Tibial artery (tissue), 4 donors: ENCODE measurements at regions of chr7 and their contacts with region 1.

Region 1: DNA sequence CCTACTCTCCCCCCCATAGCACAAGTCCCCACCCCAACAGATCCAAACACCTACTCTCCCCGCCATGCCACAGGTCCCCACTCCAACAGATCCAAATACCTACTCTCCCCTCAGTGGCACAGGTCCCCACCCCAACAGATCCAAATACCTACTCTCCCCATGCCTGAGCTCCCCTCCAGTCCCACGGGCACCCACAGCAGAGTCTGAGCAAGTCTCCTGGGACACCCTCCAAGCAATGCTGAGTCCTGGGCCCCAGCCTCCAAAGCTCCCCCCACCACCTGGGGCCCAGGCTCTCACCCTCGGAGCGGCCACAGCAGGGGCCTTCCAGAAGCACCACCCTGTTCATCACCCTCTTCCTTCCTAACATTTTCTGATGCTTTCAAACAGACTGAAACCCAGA is 63.9 kb upstream of the DNAAF5 start:
- DNase-seq: peak in 1 of 2 donors; percentile 7
- H3K4me3 ChIP-seq: no peak overlapping the region
- H3K27ac ChIP-seq: peak overlapping the region in 1 of 2 donors; percentile 8
- H3K4me1 ChIP-seq: peaks cover 5 to 52% (median 43%) of the 10 kb centered on the region in 4 donors
- H3K27me3 ChIP-seq: no peaks in the 10 kb centered on the region
- CTCF ChIP-seq: no peak

Region 2: GRCh38 chr7:712381-713138 is 50.0 kb after region 1 on chr7:
- intact Hi-C with region 1: loop called (anchors 2 kb)
- DNase-seq: peak in 1 of 2 donors; percentile 56
- H3K4me3 ChIP-seq: peak overlapping the region; percentile 43 to 67
- H3K27ac ChIP-seq: no peak overlapping the region
- H3K4me1 ChIP-seq: peaks cover 0 to 16% (median 8%) of the 10 kb centered on the region in 4 donors
- H3K27me3 ChIP-seq: peaks cover 0 to 19% of the 10 kb centered on the region in 2 donors
- CTCF ChIP-seq: no peak

Region 3: DNA sequence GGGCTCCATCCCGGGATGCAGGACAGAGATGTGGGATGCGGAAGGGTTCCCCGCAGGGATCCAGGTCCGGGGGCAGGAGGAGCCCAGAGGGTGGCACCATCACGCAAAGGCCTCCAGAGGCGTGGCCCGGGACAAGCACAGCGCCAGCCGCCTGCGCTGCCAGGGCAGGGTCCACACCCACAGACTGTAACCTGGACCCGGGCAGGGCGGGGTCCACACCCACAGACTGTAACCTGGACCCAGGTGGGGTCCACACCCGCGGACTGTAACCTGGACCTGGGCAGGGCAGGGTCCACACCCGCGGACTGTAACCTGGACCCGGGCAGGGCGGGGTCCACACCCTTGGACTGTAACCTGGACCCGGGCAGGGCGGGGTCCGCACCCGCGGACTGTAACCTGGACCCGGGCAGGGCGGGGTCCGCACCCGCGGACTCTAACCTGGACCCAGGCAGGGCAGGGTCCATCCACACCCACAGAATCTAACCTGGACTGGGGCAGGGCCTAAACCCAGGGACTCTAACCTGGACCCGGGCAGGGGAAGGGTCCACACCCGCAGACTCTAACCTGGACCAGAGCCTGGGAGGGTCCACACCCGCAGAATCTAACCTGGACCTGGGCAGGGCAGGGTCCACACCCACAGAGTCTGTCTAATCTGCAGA is 132.2 kb after region 1 on chr7:
- intact Hi-C with region 1: no loop called
- DNase-seq: no peak
- H3K4me3 ChIP-seq: no peak overlapping the region
- H3K27ac ChIP-seq: no peak overlapping the region
- H3K4me1 ChIP-seq: peaks cover 0 to 31% (median 11%) of the 10 kb centered on the region in 4 donors
- H3K27me3 ChIP-seq: no peaks in the 10 kb centered on the region
- CTCF ChIP-seq: no peak